ENCODE measurements at regions of chr22 and their contacts with region 1.

Region 1: DNA sequence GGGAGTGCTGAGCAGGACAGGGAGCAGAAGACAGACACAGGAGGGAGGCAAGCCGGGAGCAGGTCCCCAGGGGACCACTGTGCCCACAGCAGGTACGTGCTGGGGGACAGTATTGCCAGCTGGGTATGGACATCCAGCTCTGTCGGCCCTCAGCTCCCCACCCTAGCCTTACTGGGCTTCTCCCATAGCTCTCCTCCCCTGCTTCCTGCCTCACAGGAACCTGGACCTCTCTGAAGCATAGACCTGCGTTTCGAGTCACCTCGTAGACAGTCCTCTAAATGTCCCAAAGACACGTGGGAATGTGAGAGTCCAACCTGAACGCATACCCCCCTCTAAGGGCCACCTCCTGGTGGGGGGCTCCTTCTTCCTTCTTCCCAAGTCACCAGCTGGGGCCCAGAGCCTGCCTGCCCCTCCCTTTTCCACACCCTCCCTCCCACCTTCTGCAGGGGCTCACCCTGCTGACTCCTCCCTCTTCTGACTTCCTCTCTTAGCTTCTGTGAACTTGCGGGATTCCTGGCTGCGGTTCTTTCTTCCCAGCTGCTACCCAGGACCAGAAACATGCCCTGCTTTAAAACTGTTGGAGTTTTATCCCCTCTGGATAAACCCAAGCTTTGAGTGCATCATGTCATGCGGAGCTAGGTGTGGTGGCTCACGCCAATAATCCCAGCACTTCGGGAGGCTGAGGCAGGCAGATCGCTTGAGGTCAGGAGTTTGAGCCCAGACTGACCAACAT is 10.0 kb downstream of the LRRC74B start:
- DNase-seq: peak; percentile 84 to 97 (median 92)
- ATAC-seq: peak; percentile 73
- H3K4me3 ChIP-seq: no peak overlapping the region
- H3K27ac ChIP-seq: no peak overlapping the region
- H3K4me1 ChIP-seq: peaks cover 26 to 40% of the 10 kb centered on the region in 2 experiments
- H3K27me3 ChIP-seq: peaks cover 20 to 64% of the 10 kb centered on the region in 2 experiments; a peak in 4 of 5 replicates
- CTCF ChIP-seq: no peak; a peak in 1 of 6 replicates
- EP300 ChIP-seq: no peak
- POLR2A ChIP-seq: no peak
- RAD21 ChIP-seq: no peak

Region 2: GRCh38 chr22:20671409-20672081 is 384.2 kb before region 1 on chr22:
- CTCF ChIA-PET with region 1: no interaction called
- POLR2A ChIA-PET with region 1: no interaction called
- in situ Hi-C with region 1: no loop called
- intact Hi-C with region 1: no loop called
- DNase-seq: no peak
- ATAC-seq: peak; percentile 55; the same call in 2 of the 3 replicates
- H3K4me3 ChIP-seq: no peak overlapping the region
- H3K27ac ChIP-seq: no peak overlapping the region
- H3K4me1 ChIP-seq: peaks cover 0 to 18% of the 10 kb centered on the region in 2 experiments; a peak in 1 of 5 replicates
- H3K27me3 ChIP-seq: peaks cover 23 to 28% of the 10 kb centered on the region in 2 experiments
- CTCF ChIP-seq: no peak
- EP300 ChIP-seq: no peak
- POLR2A ChIP-seq: no peak
- RAD21 ChIP-seq: no peak

Region 3: GRCh38 chr22:20973634-20974286 is 82.0 kb before region 1 on chr22:
- CTCF ChIA-PET with region 1: no interaction called
- POLR2A ChIA-PET with region 1: no interaction called
- in situ Hi-C with region 1: no loop called
- intact Hi-C with region 1: no loop called
- DNase-seq: peak in 1 of 4 experiments; percentile 59
- ATAC-seq: peak; percentile 16
- H3K4me3 ChIP-seq: no peak overlapping the region
- H3K27ac ChIP-seq: no peak overlapping the region
- H3K4me1 ChIP-seq: peaks cover 0 to 34% of the 10 kb centered on the region in 2 experiments; a peak in 3 of 5 replicates
- H3K27me3 ChIP-seq: peaks cover 37 to 63% of the 10 kb centered on the region in 2 experiments; a peak in 4 of 5 replicates
- CTCF ChIP-seq: no peak
- EP300 ChIP-seq: no peak
- POLR2A ChIP-seq: no peak
- RAD21 ChIP-seq: no peak

Region 4: DNA sequence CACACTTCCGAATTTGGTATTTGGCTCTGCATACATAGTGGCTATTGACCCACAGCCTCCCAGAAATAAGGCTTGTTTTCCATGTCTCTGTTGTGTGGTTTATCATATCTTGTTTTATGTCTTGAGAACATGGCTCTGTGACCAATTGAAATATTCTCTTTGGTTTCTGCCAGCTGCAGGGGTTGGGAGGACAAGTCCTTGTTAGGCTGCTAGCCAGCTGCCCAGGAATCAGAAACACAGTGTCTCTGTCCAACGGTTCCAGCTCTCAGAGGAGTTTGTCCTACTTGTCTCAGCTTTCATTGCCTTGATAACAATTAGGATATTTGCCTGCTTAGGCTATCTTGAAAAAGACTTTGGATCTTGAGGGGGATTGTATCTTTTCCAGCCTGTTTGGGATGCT is 17.3 kb before region 1 on chr22:
- CTCF ChIA-PET with region 1: no interaction called
- POLR2A ChIA-PET with region 1: interaction called, 54 read pairs
- in situ Hi-C with region 1: no loop called
- intact Hi-C with region 1: no loop called
- DNase-seq: no peak
- ATAC-seq: 0 out of 3 replicates have a peak, but pooled peaks have one; percentile 3
- H3K4me3 ChIP-seq: no peak overlapping the region
- H3K27ac ChIP-seq: no peak overlapping the region
- H3K4me1 ChIP-seq: peaks cover 19 to 25% of the 10 kb centered on the region in 2 experiments
- H3K27me3 ChIP-seq: peaks cover 1 to 10% of the 10 kb centered on the region in 2 experiments; a peak in 2 of 5 replicates
- CTCF ChIP-seq: no peak
- EP300 ChIP-seq: no peak
- POLR2A ChIP-seq: no peak
- RAD21 ChIP-seq: no peak

Measured in K562 (cell line).